ENCODE measurements at regions of chr6 and their contacts with region 1.

Region 1: GRCh38 chr6:55886185-55886836 is 10.9 kb upstream of the BMP5 start:
- DNase-seq: no peak
- ATAC-seq: no peak
- H3K4me3 ChIP-seq: no peak overlapping the region
- H3K27ac ChIP-seq: peak overlapping the region in 1 of 10 donors; percentile 36
- H3K4me1 ChIP-seq: peaks cover 0 to 3% (median 0%) of the 10 kb centered on the region in 9 donors
- H3K27me3 ChIP-seq: no peaks in the 10 kb centered on the region
- CTCF ChIP-seq: peak in 8 of 9 donors; percentile 25 to 61 (median 45)

Region 2: GRCh38 chr6:55276745-55277530 is 609.4 kb before region 1 on chr6:
- intact Hi-C with region 1: loop called in 4 of 10 experiments (anchors 5 to 10 kb)
- DNase-seq: peak; percentile 39 to 45
- ATAC-seq: peak in 7 of 8 donors; percentile 48 to 82 (median 79)
- H3K4me3 ChIP-seq: peak overlapping the region in 7 of 10 donors; percentile 3 to 33 (median 23)
- H3K27ac ChIP-seq: peak overlapping the region in 7 of 10 donors; percentile 4 to 62 (median 54)
- H3K4me1 ChIP-seq: peaks cover 0 to 12% (median 0%) of the 10 kb centered on the region in 9 donors
- H3K27me3 ChIP-seq: no peaks in the 10 kb centered on the region
- CTCF ChIP-seq: peak; percentile 15 to 71 (median 58)

Region 3: GRCh38 chr6:55445648-55446204 is 440.6 kb before region 1 on chr6:
- intact Hi-C with region 1: loop called in 7 of 10 experiments (anchors 1 to 10 kb)
- DNase-seq: no peak
- ATAC-seq: no peak
- H3K4me3 ChIP-seq: no peak overlapping the region
- H3K27ac ChIP-seq: no peak overlapping the region
- H3K4me1 ChIP-seq: peaks cover 0 to 8% (median 0%) of the 10 kb centered on the region in 9 donors
- H3K27me3 ChIP-seq: no peaks in the 10 kb centered on the region
- CTCF ChIP-seq: peak in 8 of 9 donors; percentile 36 to 67 (median 55)

Region 4: GRCh38 chr6:55568808-55569439 is 317.4 kb before region 1 on chr6:
- intact Hi-C with region 1: loop called in 1 of 10 experiments (anchors 10 kb)
- DNase-seq: peak in 1 of 2 donors; percentile 40
- ATAC-seq: peak; percentile 69 to 97 (median 94)
- H3K4me3 ChIP-seq: no peak overlapping the region
- H3K27ac ChIP-seq: peak overlapping the region; percentile 3 to 68 (median 52)
- H3K4me1 ChIP-seq: peaks cover 0 to 23% (median 0%) of the 10 kb centered on the region in 9 donors
- H3K27me3 ChIP-seq: no peaks in the 10 kb centered on the region
- CTCF ChIP-seq: no peak

Region 5: DNA sequence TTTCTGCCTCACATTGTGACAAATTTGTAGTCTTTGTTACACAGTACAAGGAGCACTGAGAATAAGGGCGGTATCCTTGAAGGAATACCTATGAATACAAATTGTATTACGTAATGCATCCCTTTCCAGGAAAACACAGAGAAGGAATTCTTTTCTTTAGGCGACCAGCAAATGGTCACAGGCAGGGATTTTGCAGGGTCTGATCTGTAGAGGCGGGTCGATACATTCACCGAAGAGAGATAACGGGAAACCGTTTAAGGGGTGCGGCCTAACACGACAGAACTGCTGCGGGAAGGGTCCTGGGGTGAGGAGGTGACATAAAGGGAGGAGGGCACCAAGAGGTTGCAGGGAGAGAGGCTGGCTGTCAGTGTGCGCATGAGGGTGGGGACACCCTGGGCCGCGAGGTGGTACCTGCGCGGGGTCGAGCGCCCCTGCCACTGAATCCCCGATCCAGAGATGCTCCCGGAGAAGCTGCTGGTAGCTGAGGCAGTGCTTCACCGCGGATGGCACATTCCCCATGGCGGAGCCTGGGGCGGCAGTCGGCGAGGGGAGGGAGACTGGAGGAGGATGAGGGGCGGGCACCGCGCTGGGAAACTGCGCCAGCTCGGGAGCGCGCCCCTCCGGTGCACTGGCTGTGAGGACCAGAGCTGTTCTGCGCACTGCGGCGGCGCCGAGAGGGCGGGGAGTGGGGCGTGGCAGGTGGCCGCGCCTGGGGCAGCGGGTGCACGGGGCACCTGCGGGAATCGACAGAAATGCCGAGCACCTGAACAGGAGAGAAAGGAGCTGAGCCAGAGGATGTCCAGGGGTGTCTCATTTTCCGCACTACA is 307.6 kb before region 1 on chr6 and contains the start of gene HMGCLL1:
- intact Hi-C with region 1: loop called in 1 of 10 experiments (anchors 5 kb)
- DNase-seq: peak; percentile 35 to 64
- ATAC-seq: peak; percentile 82 to 93 (median 89)
- H3K4me3 ChIP-seq: peak within 1 kb of the TSS; percentile 18 to 63 (median 57)
- H3K27ac ChIP-seq: peak within 1 kb of the TSS; percentile 42 to 83 (median 68)
- H3K4me1 ChIP-seq: peaks cover 0 to 8% (median 0%) of the 10 kb centered on the region in 9 donors
- H3K27me3 ChIP-seq: peaks cover 0 to 12% (median 6%) of the 10 kb centered on the region in 7 donors
- CTCF ChIP-seq: peak in 1 of 9 donors; percentile 22
- total RNA-seq, gene HMGCLL1: 0.40 to 2.6 (median 1.1) TPM

Region 6: DNA sequence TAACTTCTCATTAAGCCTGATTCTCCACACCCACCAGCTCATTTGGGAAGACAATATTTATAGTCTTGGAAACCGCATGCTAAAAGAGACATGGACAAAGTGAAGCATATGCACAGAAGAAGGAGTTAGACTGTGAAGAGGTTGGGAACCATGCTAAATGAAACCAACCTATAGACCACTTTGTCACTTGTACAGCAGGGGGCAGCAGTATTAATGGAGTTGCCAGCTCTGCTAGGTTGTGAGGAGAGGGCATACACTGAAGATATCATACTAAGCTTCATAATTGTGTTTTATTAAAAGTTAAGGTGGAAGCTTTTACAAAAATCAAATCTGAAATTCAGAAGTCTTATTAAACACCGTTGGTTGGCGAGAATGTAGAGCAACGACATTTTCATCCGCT is 269.0 kb before region 1 on chr6:
- intact Hi-C with region 1: loop called in 6 of 10 experiments (anchors 5 to 10 kb)
- DNase-seq: no peak
- ATAC-seq: peak in 1 of 8 donors; percentile 65
- H3K4me3 ChIP-seq: no peak overlapping the region
- H3K27ac ChIP-seq: no peak overlapping the region
- H3K4me1 ChIP-seq: no peaks in the 10 kb centered on the region
- H3K27me3 ChIP-seq: no peaks in the 10 kb centered on the region
- CTCF ChIP-seq: peak; percentile 11 to 52 (median 36)

Region 7: GRCh38 chr6:55777461-55777860 is 108.8 kb before region 1 on chr6:
- intact Hi-C with region 1: no loop called
- DNase-seq: no peak
- ATAC-seq: no peak
- H3K4me3 ChIP-seq: no peak overlapping the region
- H3K27ac ChIP-seq: no peak overlapping the region
- H3K4me1 ChIP-seq: no peaks in the 10 kb centered on the region
- H3K27me3 ChIP-seq: no peaks in the 10 kb centered on the region
- CTCF ChIP-seq: no peak

Region 8: DNA sequence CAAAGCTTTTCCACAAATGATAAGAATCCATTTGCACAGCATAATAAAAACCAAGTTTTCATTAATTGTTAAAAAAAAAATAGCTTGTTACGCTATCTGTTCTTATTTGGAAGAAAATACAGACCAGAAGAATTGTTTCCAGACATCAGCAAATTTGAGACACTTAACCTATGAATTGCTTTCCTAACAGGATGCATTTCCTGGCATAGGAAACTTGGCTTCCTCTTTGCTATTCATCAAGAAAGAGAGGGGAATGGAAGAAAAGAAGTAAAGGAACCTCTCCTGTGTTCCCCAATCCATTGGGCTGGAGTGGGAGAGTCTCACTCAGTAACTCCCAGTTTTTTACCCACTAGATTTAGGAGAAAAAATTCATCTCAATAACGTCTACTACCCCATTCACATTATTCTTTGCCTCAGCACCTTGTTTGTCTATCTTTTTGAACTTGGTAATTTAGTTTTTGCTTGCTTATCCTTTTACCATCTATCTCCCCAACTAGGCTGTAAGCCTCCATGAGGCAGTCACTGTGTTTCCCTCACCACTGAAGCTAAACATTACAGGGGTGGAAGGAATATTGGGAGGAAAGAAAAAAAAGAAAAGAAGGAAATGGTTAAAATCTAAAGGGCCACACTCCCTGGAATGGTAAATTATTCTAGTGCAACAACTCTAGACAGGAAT is 210.8 kb after region 1 on chr6:
- intact Hi-C with region 1: loop called in 1 of 10 experiments (anchors 5 kb)
- DNase-seq: no peak
- ATAC-seq: no peak
- H3K4me3 ChIP-seq: no peak overlapping the region
- H3K27ac ChIP-seq: no peak overlapping the region
- H3K4me1 ChIP-seq: peaks cover 0 to 13% (median 0%) of the 10 kb centered on the region in 9 donors
- H3K27me3 ChIP-seq: no peaks in the 10 kb centered on the region
- CTCF ChIP-seq: no peak